ENCODE measurements at regions of chr4 and their contacts with region 1.

Region 1: GRCh38 chr4:103008875-103009729 is 10.4 kb downstream of the SLC9B1 start:
- DNase-seq: no peak
- ATAC-seq: peak; percentile 76

Region 2: GRCh38 chr4:102449751-102450352 is 559.2 kb before region 1 on chr4:
- intact Hi-C with region 1: loop called (anchors 2 kb)
- DNase-seq: no peak
- ATAC-seq: peak; percentile 60

Region 3: DNA sequence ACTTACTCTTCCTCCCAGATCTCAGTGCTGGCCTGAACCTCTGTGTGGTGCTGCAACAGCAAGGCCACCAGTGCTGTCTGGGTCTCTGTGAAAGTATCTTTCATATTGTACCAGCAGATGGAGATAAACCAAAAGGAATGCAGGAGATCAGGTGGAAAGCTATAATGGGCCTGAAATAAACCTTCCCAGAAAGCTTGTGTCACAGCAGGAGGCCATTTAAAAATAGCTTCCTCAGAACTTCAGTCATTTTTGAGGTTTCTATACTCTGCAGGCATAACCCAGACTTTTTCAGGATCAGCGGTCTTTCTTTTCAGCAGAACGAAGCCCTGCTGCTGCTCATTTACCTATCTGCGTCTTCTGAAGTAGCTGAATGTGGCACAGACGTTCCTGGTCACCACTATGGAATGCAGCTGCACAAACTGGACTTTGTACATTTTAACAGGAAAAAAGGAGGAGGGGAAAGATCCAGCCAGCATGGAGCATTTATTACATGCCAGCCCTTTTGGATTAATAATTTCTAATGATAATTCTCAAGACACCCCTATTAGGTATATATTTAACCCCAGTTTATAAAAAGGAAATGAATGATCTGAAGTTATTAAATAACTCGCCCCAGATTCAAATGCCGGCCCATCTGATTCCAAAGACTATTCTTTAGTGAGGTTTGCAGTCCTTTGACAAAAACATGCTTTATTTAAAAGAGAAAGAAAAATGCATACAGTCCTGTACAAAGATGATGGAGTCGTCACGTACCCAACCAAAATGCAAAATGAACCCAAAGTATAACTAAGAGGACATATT is 388.2 kb before region 1 on chr4:
- intact Hi-C with region 1: loop called (anchors 2 kb)
- DNase-seq: no peak
- ATAC-seq: peak; percentile 93

Region 4: DNA sequence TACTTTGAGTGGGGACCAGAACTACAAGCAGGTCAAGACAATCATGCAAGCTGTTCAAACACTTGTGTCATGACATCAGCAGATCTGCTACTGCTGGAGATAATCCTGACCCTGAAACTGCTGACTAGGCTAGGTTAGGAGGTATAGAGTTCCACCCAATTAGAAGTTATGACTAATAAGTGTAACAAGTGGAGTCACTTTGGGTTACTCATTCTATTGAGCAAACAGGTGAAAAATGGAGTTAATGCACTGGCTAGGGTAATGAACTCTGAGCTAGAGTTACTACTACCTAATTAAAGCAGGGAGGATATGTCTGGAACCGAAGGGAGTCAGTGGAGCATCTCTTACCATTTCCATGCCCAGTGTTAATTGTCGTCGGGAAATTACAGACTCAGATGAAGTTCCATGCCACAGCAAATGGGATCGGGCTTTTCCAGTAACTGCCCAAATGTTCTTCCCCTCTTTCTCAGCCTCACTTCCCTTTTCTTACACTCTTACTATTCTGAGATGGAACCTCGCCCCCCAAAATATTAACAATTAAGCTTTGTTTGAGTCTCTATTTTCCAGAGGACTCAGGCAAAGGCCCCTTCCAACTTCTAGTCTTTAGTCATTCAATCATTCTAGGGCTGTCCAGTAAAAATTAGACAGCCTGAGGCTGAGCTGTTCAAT is 228.5 kb before region 1 on chr4:
- intact Hi-C with region 1: no loop called
- DNase-seq: no peak
- ATAC-seq: no peak

Region 5: GRCh38 chr4:102981005-102981404 is 28.1 kb before region 1 on chr4:
- intact Hi-C with region 1: no loop called
- DNase-seq: no peak
- ATAC-seq: no peak

Measured in Right ventricle myocardium inferior (tissue), 1 donor.